Heart right ventricle (tissue), 16 donors: ENCODE measurements at regions of chr5 and their contacts with region 1.

Region 1: GRCh38 chr5:172156541-172156994 is 31.5 kb downstream of the STK10 start:
- DNase-seq: peak; percentile 68 to 87
- ATAC-seq: peak; percentile 71 to 96 (median 92)
- H3K4me3 ChIP-seq: no peak overlapping the region
- H3K27ac ChIP-seq: peak overlapping the region in 8 of 10 donors; percentile 24 to 80 (median 52)
- H3K4me1 ChIP-seq: peaks cover 0 to 62% (median 34%) of the 10 kb centered on the region in 9 donors
- H3K27me3 ChIP-seq: no peaks in the 10 kb centered on the region
- CTCF ChIP-seq: no peak

Region 2: GRCh38 chr5:172179361-172179989 is 22.9 kb after region 1 on chr5:
- intact Hi-C with region 1: loop called in 1 of 10 experiments (anchors 2 kb)
- DNase-seq: peak in 1 of 2 donors; percentile 57
- ATAC-seq: peak; percentile 57 to 88 (median 68)
- H3K4me3 ChIP-seq: peak overlapping the region in 6 of 10 donors; percentile 19 to 42 (median 31)
- H3K27ac ChIP-seq: peak overlapping the region in 9 of 10 donors; percentile 62 to 93 (median 85)
- H3K4me1 ChIP-seq: peaks cover 9 to 96% (median 58%) of the 10 kb centered on the region in 9 donors
- H3K27me3 ChIP-seq: no peaks in the 10 kb centered on the region
- CTCF ChIP-seq: no peak

Region 3: DNA sequence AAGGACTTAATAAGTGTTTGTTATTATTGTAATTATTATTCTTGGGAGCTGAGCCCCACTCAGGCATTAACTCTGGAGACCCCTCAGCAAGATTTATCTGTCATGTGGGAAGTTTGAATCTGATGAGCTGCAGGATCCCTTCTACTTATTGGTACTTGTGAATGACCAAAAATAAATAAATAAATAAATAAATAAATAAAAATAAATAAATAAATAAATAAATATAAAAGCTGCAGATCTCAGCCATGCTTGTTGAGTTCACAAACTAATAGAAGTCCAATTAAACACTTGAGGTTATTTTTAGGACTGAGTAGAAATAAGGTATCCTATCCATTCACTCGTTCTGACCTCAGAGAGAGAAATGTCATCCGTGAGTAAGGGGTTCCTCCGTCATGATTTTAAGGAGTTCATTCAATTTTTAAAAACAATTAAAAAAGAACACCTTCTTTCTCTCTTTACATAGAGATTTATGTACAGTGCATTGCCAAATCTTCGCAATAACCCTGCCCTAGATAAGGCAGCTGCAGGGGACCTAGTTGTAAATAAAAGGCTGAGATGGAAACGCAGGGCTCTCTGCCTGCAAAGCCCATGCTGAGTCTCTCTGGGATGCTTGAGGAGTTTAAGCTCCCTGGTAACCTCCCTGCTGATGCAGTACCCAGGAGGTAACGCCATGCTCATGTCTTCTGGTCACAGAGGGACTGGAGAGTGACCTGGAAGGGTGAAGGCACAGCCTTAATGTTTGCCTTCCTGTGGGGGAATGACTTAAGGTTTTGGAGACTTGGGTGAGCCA is 38.6 kb after region 1 on chr5:
- intact Hi-C with region 1: no loop called
- DNase-seq: no peak
- ATAC-seq: no peak
- H3K4me3 ChIP-seq: no peak overlapping the region
- H3K27ac ChIP-seq: no peak overlapping the region
- H3K4me1 ChIP-seq: no peaks in the 10 kb centered on the region
- H3K27me3 ChIP-seq: no peaks in the 10 kb centered on the region
- CTCF ChIP-seq: no peak